ENCODE measurements at regions of chr1 and their contacts with region 1.

Region 1: GRCh38 chr1:156705918-156706656 is 704 bp upstream of the CRABP2 start:
- DNase-seq: peak; percentile 19 to 85 (median 59)
- ATAC-seq: peak; percentile 70 to 76 (median 73)
- H3K4me3 ChIP-seq: peak overlapping the region; percentile 55 to 61
- H3K4me3 Mint-ChIP-seq: peak overlapping the region; percentile 83 to 91 (median 86)
- H3K27ac ChIP-seq: peak overlapping the region; percentile 47
- H3K27ac Mint-ChIP-seq: peak overlapping the region; percentile 76 to 83
- H3K4me1 ChIP-seq: peaks cover 14 to 38% of the 10 kb centered on the region in 2 experiments
- H3K4me1 Mint-ChIP-seq: peaks cover 18 to 32% (median 30%) of the 10 kb centered on the region in 3 donors
- H3K27me3 ChIP-seq: peaks cover 7 to 47% of the 10 kb centered on the region in 2 experiments
- H3K27me3 Mint-ChIP-seq: peaks cover 7 to 29% of the 10 kb centered on the region in 2 donors

Region 2: DNA sequence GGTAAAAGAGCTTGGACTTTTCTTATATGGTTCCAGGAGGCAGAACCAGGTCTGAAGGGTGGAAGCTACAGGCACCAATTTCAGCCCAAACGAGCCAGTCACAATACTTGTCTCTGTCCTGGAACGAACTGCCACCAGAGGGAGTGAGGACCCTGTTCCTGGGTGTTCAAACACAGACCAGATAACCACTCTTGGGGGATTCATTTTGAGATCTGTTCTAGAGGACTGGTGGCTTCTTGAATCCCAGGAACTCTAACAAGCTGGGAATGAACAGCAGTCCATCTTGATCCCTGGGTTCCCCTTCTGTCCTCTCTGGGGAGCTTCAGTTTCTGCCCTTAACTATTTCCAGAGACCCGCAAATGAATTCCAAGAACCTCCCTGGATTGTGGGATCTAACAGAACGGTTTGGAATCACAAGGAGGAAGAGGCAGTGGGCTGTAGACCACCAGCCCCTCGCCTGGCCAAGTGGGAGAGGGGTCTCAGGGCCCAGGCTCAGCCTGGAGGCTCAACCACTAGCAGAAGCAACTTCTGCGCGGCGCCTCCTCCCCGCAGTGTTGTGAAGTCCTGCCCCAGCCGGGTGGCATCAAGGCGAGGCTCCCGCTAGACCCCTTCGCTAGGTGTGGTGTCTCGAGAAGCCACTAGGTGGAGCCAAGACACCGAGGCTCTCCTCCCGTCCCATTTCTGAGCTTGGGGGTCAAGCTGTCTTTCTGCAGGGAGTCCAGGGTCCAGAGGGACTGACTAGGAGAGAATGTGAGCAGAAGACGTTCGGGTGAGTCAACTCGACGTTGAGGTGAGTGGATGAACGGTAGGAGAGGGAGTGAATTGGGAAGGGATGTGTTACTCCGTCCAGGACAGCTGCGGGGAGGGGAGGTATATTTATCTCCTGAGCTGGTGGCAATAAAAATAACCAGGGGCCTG is 16.8 kb before region 1 on chr1:
- CTCF ChIA-PET with region 1: interaction called, 11 to 22 read pairs
- POLR2A ChIA-PET with region 1: no interaction called
- DNase-seq: peak; percentile 43 to 84 (median 70)
- ATAC-seq: peak; percentile 94 to 96 (median 96)
- H3K4me3 ChIP-seq: no peak overlapping the region
- H3K4me3 Mint-ChIP-seq: peak overlapping the region in 1 of 3 donors; percentile 25
- H3K27ac ChIP-seq: no peak overlapping the region
- H3K27ac Mint-ChIP-seq: peak overlapping the region in 1 of 2 donors; percentile 12
- H3K4me1 ChIP-seq: peaks cover 18 to 32% of the 10 kb centered on the region in 2 experiments
- H3K4me1 Mint-ChIP-seq: peaks cover 23 to 33% (median 26%) of the 10 kb centered on the region in 3 donors
- H3K27me3 ChIP-seq: peaks cover 5 to 84% of the 10 kb centered on the region in 2 experiments
- H3K27me3 Mint-ChIP-seq: peaks cover 41 to 61% of the 10 kb centered on the region in 2 donors